ENCODE measurements at regions of chr17 and their contacts with region 1.

Region 1: GRCh38 chr17:3888343-3889171 is 4.3 kb downstream of the CAMKK1 start:
- DNase-seq: peak; percentile 81
- H3K4me3 ChIP-seq: no peak overlapping the region
- H3K27ac ChIP-seq: peak overlapping the region; percentile 45
- H3K4me1 ChIP-seq: peaks cover 50% of the 10 kb centered on the region
- H3K27me3 ChIP-seq: no peaks in the 10 kb centered on the region
- CTCF ChIP-seq: no peak

Region 2: GRCh38 chr17:3845621-3846441 is 42.7 kb before region 1 on chr17 and contains the start of gene NCBP3:
- CTCF ChIA-PET with region 1: interaction called, 12 read pairs
- dilution Hi-C with region 1: no loop called
- in situ Hi-C with region 1: no loop called
- intact Hi-C with region 1: no loop called
- DNase-seq: peak; percentile 90
- H3K4me3 ChIP-seq: peak within 1 kb of the TSS; percentile 79 to 99 (median 93)
- H3K27ac ChIP-seq: peak within 1 kb of the TSS; percentile 76
- H3K4me1 ChIP-seq: peaks cover 16% of the 10 kb centered on the region
- H3K27me3 ChIP-seq: no peaks in the 10 kb centered on the region
- CTCF ChIP-seq: peak; percentile 65 to 96
- total RNA-seq, gene NCBP3: 21.2 to 42.0 TPM